A549 (cell line): ENCODE measurements at regions of chr15 and their contacts with region 1.

Region 1: GRCh38 chr15:78308422-78309032 is 9.1 kb upstream of the SKIC8 start:
- DNase-seq: peak; percentile 77 to 87
- ATAC-seq: peak; percentile 85 to 95
- H3K4me3 ChIP-seq: no peak overlapping the region
- H3K27ac ChIP-seq: 0 out of 6 replicates have a peak overlapping the region, but pooled peaks of 1 of the 2 experiments have one; percentile 17
- H3K4me1 ChIP-seq: peaks cover 5% of the 10 kb centered on the region; the same call in 2 of the 3 replicates
- CTCF ChIP-seq: peak; percentile 98
- EP300 ChIP-seq: no peak
- POLR2A ChIP-seq: no peak
- RAD21 ChIP-seq: peak; percentile 98

Region 2: DNA sequence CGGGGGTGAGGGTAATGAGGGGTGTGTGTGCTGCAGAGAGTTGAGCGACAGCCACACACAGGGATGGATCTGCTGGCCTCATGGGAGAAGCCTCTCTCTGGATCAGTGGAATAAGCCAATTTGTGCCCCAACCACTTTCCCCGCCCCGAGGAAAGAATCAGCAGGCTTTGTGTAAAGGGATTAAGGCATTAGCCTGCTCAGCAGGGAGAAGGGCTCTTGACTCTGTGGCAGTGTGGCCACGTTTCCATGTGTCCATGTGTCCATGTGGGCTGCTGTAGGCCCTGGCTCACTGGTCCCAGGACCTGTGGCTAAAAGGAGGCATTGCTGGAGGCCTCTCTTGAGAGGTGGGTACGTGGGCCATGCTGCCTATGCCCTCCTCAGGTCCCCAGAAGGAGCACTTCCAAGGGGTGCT is 783.1 kb before region 1 on chr15:
- CTCF ChIA-PET with region 1: no interaction called
- POLR2A ChIA-PET with region 1: no interaction called
- DNase-seq: no peak
- ATAC-seq: no peak; a peak in 1 of 6 replicates
- H3K4me3 ChIP-seq: no peak overlapping the region
- H3K27ac ChIP-seq: no peak overlapping the region
- H3K4me1 ChIP-seq: no peaks in the 10 kb centered on the region
- CTCF ChIP-seq: no peak
- EP300 ChIP-seq: no peak
- POLR2A ChIP-seq: no peak
- RAD21 ChIP-seq: no peak

Region 3: DNA sequence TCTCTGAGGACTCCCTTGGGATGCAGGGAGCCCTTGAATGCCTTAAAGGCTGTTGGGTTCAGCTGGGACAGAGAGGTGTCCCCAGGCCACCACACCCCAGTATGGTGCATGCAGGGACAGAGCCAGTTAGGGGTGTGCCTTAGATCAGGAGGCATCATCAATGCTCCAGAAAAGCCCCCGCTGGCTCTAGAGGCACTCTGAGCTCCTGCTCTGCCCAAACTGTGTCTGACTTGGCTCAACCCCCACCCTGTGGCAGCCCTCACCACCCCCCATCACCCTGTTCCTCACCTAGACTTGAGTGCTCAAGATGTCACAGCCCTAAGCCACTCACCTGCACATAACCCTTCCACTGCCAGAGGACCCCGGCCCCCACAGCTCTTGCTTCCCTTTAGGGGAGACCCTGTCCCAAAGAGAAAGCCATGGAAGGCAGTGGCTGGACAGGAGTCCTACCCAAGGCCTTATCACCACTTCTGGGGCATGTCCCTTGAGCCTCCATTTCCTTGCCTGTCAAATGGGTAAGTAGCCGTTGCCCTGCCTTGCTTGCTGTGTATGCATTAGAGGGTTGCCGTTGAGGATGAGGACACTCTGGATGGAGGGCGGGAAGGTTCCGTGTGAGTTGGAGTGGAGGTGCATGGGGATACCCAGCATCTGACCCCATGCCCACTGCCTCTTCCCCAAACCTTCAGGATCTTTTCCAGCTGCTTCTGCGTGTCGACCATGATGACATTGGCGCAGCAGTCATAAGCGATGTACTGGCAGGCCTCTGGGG is 115.5 kb before region 1 on chr15:
- CTCF ChIA-PET with region 1: no interaction called
- POLR2A ChIA-PET with region 1: no interaction called
- DNase-seq: no peak
- ATAC-seq: no peak
- H3K4me3 ChIP-seq: no peak overlapping the region
- H3K27ac ChIP-seq: no peak overlapping the region
- H3K4me1 ChIP-seq: no peaks in the 10 kb centered on the region
- CTCF ChIP-seq: no peak
- EP300 ChIP-seq: no peak
- POLR2A ChIP-seq: no peak
- RAD21 ChIP-seq: no peak

Region 4: DNA sequence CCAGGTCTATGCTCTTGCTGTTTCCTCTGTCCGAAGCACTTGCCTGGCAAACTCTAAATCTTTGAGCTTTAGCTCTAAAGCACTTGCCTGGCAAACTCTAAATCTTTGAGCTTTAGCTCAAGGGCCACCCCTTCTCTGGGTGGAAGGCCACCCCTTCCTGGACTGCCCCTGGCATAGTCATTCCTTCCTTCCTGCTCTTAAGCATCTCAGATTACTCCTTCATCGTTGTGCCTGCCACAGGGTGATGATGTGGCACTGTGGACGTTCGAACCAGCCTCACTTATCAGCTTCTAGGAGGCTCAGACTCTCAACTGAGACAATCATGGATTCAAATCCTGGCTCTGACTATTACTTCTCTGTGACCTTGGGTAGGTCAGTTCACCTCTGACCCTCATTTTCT is 21.1 kb after region 1 on chr15:
- CTCF ChIA-PET with region 1: interaction called, 169 read pairs
- POLR2A ChIA-PET with region 1: no interaction called
- DNase-seq: no peak
- ATAC-seq: no peak
- H3K4me3 ChIP-seq: no peak overlapping the region
- H3K27ac ChIP-seq: no peak overlapping the region
- H3K4me1 ChIP-seq: no peaks in the 10 kb centered on the region
- CTCF ChIP-seq: no peak
- EP300 ChIP-seq: no peak
- POLR2A ChIP-seq: no peak
- RAD21 ChIP-seq: no peak

Region 5: GRCh38 chr15:78396976-78397375 is 88.4 kb after region 1 on chr15:
- CTCF ChIA-PET with region 1: interaction called, 19 read pairs
- POLR2A ChIA-PET with region 1: no interaction called
- DNase-seq: peak; percentile 31 to 38
- ATAC-seq: peak; percentile 58 to 86; a peak in 5 of 6 replicates
- H3K4me3 ChIP-seq: no peak overlapping the region
- H3K27ac ChIP-seq: no peak overlapping the region
- H3K4me1 ChIP-seq: no peaks in the 10 kb centered on the region
- CTCF ChIP-seq: peak; percentile 26; the same call in 2 of the 3 replicates
- EP300 ChIP-seq: no peak
- POLR2A ChIP-seq: no peak
- RAD21 ChIP-seq: 0 out of 5 replicates have a peak, but pooled peaks of 1 of the 2 experiments have one; percentile 11

Region 6: GRCh38 chr15:78422571-78423340 is 114.2 kb after region 1 on chr15:
- CTCF ChIA-PET with region 1: interaction called, 571 read pairs
- POLR2A ChIA-PET with region 1: interaction called, 4 read pairs
- DNase-seq: peak; percentile 74 to 82
- ATAC-seq: peak; percentile 80 to 90
- H3K4me3 ChIP-seq: no peak overlapping the region
- H3K27ac ChIP-seq: no peak overlapping the region
- H3K4me1 ChIP-seq: no peaks in the 10 kb centered on the region
- CTCF ChIP-seq: peak; percentile 95
- EP300 ChIP-seq: no peak
- POLR2A ChIP-seq: no peak
- RAD21 ChIP-seq: peak; percentile 64 to 72

Region 7: DNA sequence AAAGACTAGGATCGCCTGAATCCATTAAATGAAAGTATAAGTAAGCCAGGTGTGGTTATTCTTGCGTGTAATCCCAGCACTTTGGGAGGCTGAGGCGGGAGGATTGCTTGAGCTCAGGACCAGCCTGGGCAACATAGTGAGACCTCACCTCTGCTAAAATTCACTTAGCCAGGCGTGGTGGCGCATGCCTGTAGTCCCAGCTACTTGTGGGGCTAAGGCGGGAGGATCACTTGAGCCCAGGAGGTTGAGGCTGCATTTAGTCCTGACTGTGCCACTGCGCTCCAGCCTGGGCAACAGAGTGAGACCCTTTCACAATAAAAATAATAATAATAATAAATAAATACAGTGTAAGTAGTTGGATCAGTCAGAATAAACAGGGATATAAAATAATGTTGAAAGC is 173.4 kb after region 1 on chr15:
- CTCF ChIA-PET with region 1: interaction called, 13 read pairs
- POLR2A ChIA-PET with region 1: no interaction called
- DNase-seq: no peak
- ATAC-seq: peak; percentile 29 to 44; a peak in 4 of 6 replicates
- H3K4me3 ChIP-seq: no peak overlapping the region
- H3K27ac ChIP-seq: no peak overlapping the region
- H3K4me1 ChIP-seq: no peaks in the 10 kb centered on the region
- CTCF ChIP-seq: no peak
- EP300 ChIP-seq: no peak
- POLR2A ChIP-seq: no peak
- RAD21 ChIP-seq: no peak

Region 8: GRCh38 chr15:78739996-78740903 is 431.7 kb after region 1 on chr15:
- CTCF ChIA-PET with region 1: interaction called, 19 read pairs
- POLR2A ChIA-PET with region 1: no interaction called
- DNase-seq: peak in 1 of 2 experiments; percentile 88
- ATAC-seq: peak; percentile 84 to 97
- H3K4me3 ChIP-seq: no peak overlapping the region
- H3K27ac ChIP-seq: peak overlapping the region; percentile 65 to 80
- H3K4me1 ChIP-seq: peaks cover 4% of the 10 kb centered on the region
- CTCF ChIP-seq: peak; percentile 69
- EP300 ChIP-seq: no peak
- POLR2A ChIP-seq: no peak
- RAD21 ChIP-seq: peak; percentile 60 to 67